Head of caudate nucleus (tissue), 42 donors: ENCODE measurements at regions of chr3 and their contacts with region 1.

Region 1: GRCh38 chr3:187745201-187746058 is at the start of gene BCL6:
- DNase-seq: peak; percentile 84 to 97 (median 92)

Region 2: DNA sequence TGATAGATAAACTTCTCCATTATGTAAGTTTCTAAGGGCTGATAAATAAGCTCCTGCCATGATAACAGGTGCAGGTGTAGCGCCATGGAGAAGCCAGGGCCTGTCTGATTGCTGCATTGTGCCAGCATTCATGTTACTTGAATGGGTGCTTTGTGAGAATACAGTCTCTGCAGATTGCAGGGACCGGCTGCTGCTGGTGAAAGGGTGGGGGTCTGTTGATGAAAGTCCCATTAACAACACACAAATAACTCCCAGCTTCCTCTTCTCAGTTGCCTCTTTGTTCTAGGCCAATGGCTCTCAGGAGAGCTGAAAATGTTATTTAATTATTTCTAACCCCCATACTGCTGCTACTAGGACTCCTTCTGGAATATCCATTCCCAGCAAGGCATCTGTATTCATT is 300.1 kb before region 1 on chr3:
- intact Hi-C with region 1: no loop called
- DNase-seq: peak in 31 of 42 donors; percentile 7 to 66 (median 22)

Region 3: GRCh38 chr3:187586226-187586625 is 159.2 kb before region 1 on chr3:
- intact Hi-C with region 1: no loop called
- DNase-seq: no peak

Region 4: GRCh38 chr3:188052169-188053030 is 307.0 kb after region 1 on chr3:
- intact Hi-C with region 1: loop called (anchors 2 kb)
- DNase-seq: peak; percentile 83 to 100 (median 97)

Region 5: GRCh38 chr3:188262913-188263683 is 517.7 kb after region 1 on chr3:
- intact Hi-C with region 1: loop called (anchors 10 kb)
- DNase-seq: peak in 40 of 42 donors; percentile 26 to 87 (median 64)

Region 6: GRCh38 chr3:188584162-188584529 is 838.7 kb after region 1 on chr3:
- intact Hi-C with region 1: loop called (anchors 10 kb)
- DNase-seq: peak in 18 of 42 donors; percentile 13 to 76 (median 48)